Left cardiac atrium (tissue), 4 donors: ENCODE measurements at regions of chr4 and their contacts with region 1.

Region 1: GRCh38 chr4:99615170-99615820 is 40.7 kb downstream of the MTTP start:
- DNase-seq: peak; percentile 15
- ATAC-seq: peak; percentile 96 to 98

Region 2: GRCh38 chr4:99540287-99540939 is 74.9 kb before region 1 on chr4:
- intact Hi-C with region 1: loop called in 1 of 2 experiments (anchors 2 kb)
- DNase-seq: no peak
- ATAC-seq: no peak